ENCODE measurements at regions of chr2 and their contacts with region 1.

Region 1: DNA sequence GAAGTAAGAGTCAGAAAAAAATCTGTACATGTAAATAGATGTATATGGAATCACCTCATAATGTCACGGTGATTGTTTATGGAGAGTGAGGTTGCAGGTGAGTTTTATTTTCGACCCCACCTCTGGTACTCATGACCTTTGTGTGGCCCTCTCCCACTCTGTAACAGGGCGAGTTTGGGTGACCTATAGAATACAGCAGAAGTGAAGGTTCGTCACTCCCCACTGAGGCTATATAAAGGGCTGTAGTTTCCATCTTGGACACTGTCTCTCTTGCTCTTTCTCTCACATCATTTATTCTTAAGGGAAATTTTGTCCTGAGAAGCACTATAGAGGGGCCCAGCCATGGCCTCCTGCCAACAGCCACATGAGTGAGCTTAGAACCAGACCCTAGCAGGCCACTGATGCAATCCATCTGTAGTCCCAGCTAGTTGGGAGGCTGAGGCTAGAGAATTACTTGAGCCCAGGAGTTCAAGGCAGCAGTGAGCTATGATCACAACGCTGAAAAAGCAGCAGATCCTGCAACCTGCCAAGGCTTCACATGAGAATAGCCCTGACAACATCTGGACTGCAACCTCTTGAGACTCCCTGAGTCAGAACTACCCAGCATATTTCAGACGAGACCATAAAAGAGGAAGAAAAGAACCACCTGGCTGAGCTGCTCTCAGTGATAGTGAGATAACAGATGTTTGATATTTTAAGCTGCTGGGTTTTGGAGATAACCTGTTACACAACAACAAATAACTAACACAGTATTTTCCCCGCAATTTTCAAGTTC is 74.3 kb upstream of the SLC1A4 start:
- DNase-seq: peak; percentile 78 to 98 (median 97)
- H3K4me3 ChIP-seq: no peak overlapping the region
- H3K27ac ChIP-seq: no peak overlapping the region
- H3K4me1 ChIP-seq: peaks cover 13 to 39% (median 31%) of the 10 kb centered on the region in 4 experiments
- H3K27me3 ChIP-seq: no peaks in the 10 kb centered on the region

Region 2: GRCh38 chr2:64904413-64905329 is 10.3 kb before region 1 on chr2:
- CTCF ChIA-PET with region 1: interaction called, 17 read pairs
- POLR2A ChIA-PET with region 1: no interaction called
- DNase-seq: peak in 2 of 3 donors; percentile 62 to 67
- H3K4me3 ChIP-seq: peak overlapping the region in 2 of 7 experiments; percentile 16 to 33
- H3K27ac ChIP-seq: no peak overlapping the region
- H3K4me1 ChIP-seq: peaks cover 0 to 39% (median 15%) of the 10 kb centered on the region in 4 experiments
- H3K27me3 ChIP-seq: no peaks in the 10 kb centered on the region

Region 3: GRCh38 chr2:64937687-64938491 is 23.0 kb after region 1 on chr2:
- CTCF ChIA-PET with region 1: interaction called, 36 read pairs
- POLR2A ChIA-PET with region 1: interaction called, 4 read pairs
- DNase-seq: no peak
- H3K4me3 ChIP-seq: no peak overlapping the region
- H3K27ac ChIP-seq: no peak overlapping the region
- H3K4me1 ChIP-seq: peaks cover 9 to 39% (median 37%) of the 10 kb centered on the region in 4 experiments
- H3K27me3 ChIP-seq: no peaks in the 10 kb centered on the region

Region 4: DNA sequence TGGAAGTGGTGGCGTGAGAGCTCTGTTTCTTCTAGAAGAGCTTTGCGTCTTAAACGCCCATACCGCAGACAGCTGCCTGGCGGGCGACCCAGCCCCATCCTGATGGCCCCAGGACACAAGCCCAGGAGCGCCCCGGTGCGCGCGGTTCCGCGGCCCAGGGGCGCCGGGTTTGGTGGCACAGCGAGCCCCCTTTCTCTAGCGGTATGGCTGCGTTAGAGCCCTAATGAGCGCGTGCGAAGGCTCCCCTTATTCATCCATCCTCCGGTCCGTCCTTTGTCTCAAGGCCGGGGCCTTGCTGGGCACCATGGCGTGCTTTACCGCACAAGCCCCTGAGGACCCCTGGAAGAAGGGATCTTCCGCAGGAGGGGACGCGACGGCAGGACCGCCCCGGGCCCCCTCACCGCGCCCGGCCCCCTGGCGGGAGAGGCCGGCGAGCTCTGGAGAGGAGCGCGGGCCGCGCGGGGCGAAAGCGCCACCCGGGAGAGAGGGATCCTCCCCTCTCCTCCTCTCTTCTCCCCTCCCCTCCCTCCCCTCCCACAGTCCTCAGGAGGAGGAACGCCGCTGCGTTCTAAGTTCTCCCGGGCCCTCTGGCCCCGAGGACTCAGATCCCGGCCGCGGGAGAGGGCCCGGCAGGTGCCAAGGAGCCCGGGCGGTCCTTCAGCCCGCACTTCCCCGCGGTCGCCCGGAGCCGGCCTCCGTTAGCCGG is 73.7 kb after region 1 on chr2:
- CTCF ChIA-PET with region 1: interaction called, 60 read pairs
- POLR2A ChIA-PET with region 1: interaction called, 7 read pairs
- DNase-seq: peak; percentile 77 to 98 (median 79)
- H3K4me3 ChIP-seq: peak overlapping the region; percentile 69 to 88 (median 83)
- H3K27ac ChIP-seq: peak overlapping the region; percentile 93 to 98
- H3K4me1 ChIP-seq: peaks cover 7 to 71% (median 52%) of the 10 kb centered on the region in 4 experiments
- H3K27me3 ChIP-seq: no peaks in the 10 kb centered on the region

Region 5: GRCh38 chr2:65031341-65032018 is 116.6 kb after region 1 on chr2:
- CTCF ChIA-PET with region 1: interaction called, 58 read pairs
- POLR2A ChIA-PET with region 1: interaction called, 6 read pairs
- DNase-seq: peak in 2 of 3 donors; percentile 29 to 34
- H3K4me3 ChIP-seq: peak overlapping the region in 2 of 7 experiments; percentile 14 to 37
- H3K27ac ChIP-seq: no peak overlapping the region
- H3K4me1 ChIP-seq: peaks cover 9 to 33% (median 20%) of the 10 kb centered on the region in 4 experiments
- H3K27me3 ChIP-seq: no peaks in the 10 kb centered on the region

Region 6: GRCh38 chr2:65731476-65731875 is 816.6 kb after region 1 on chr2:
- CTCF ChIA-PET with region 1: no interaction called
- POLR2A ChIA-PET with region 1: no interaction called
- DNase-seq: no peak
- H3K4me3 ChIP-seq: no peak overlapping the region
- H3K27ac ChIP-seq: no peak overlapping the region
- H3K4me1 ChIP-seq: peaks cover 0 to 4% (median 3%) of the 10 kb centered on the region in 4 experiments
- H3K27me3 ChIP-seq: no peaks in the 10 kb centered on the region

Measured in common myeloid progenitor, CD34-positive (primary cell).